GM18951 (cell line): ENCODE measurements at regions of chr12 and their contacts with region 1.

Region 1: DNA sequence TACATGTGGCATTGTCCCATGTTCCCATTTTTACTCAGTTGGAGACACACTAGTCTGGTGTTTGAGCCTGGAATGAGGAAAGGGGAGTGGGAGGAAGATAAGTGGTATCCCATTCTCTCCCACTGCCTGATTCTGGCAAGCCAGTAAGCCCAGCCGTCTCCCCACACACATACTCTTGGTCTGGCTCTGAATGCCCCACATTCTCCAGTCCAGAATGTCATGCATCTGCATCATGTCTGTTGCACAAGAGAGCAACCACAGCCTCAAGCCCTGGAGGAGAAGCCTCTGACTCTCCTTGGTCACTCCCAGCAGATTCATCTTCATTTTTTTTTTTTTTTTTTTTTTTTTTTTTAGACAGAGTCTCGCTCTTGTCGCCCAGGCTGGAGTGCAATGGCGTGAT is 48.0 kb downstream of the DRAM1 start:
- POLR2A ChIP-seq: no peak

Region 2: DNA sequence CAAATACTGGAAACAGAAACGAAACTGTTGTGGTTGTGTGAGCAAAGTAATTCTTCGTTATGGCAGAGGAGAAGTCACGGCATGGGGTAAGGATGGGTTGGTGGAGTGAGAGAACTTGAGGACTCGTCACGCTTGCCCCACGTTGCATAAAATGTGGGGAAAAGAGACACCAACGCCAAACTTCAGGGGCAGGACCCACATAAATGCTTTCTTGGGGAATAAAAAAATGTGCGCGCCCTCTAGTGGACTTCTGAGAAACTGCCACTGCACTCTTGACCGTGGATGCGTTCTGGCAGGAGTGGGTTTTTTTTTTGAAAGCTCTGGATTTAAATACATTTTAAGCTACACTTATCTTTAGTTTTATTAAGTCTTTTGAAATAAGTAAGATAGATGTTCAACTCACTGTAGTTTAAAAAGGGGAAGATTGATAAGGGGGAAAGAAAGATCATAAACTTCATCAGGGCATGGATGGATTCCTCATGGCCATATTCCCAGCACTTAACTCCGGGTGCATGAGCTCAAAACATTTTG is 559.1 kb after region 1 on chr12:
- in situ Hi-C with region 1: loop called (anchors 10 kb)
- POLR2A ChIP-seq: no peak

Region 3: DNA sequence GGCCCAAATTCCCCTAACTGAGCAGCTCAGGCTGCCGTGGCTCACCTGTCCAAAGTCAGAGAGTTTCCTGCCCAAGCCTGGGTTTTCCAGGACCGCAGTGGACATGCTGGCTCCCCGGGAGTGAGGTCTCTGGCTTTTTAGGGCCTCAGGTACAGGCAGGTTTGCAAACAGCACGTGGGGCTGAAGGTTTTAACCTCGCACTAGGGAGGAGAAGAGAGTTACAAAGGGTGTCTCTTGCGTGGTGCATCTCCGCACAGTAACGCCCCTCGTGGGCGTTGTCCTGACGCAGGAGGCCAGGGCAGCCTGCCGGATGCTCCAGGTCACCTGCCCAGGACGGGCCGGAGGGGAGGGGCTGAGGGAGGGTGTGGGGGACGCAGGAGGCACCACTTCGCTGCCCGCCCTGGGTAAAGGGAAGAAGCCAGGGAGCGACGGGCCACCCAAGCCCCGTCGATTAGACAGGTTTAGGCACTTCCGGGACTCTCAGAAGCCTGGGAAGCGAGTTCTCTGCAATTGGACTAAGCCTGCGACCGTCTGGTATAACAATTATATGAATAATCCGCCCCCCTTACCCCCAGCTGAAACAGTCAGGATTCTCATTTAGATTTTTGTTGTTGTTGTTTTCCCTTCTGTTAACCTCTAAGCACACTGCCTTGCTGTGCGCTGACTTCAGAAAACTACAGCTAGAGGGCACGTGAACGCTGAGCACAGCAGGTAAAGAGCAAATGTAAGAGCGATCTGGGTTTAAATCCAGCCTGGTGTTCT is 991.8 kb after region 1 on chr12 and contains the start of gene PAH:
- in situ Hi-C with region 1: no loop called
- POLR2A ChIP-seq: no peak